Activated B cell treated with CpG ODN at 0.5 μM for 24 hours (primary cell): ENCODE measurements at regions of chr12 and their contacts with region 1.

Region 1: GRCh38 chr12:25386831-25387731 is 136.4 kb upstream of the KRAS start:
- DNase-seq: peak; percentile 45
- ATAC-seq: peak; percentile 11
- H3K4me3 Mint-ChIP-seq: peak overlapping the region; percentile 97
- H3K27ac Mint-ChIP-seq: peak overlapping the region; percentile 100
- H3K4me1 Mint-ChIP-seq: peaks cover 34% of the 10 kb centered on the region
- H3K27me3 Mint-ChIP-seq: no peaks in the 10 kb centered on the region
- CTCF ChIP-seq: peak; percentile 62

Region 2: GRCh38 chr12:24960222-24960855 is 426.7 kb before region 1 on chr12:
- CTCF ChIA-PET with region 1: interaction called, 3 read pairs
- POLR2A ChIA-PET with region 1: no interaction called
- intact Hi-C with region 1: loop called (anchors 1 kb)
- DNase-seq: no peak
- ATAC-seq: peak; percentile 79
- H3K4me3 Mint-ChIP-seq: no peak overlapping the region
- H3K27ac Mint-ChIP-seq: no peak overlapping the region
- H3K4me1 Mint-ChIP-seq: peaks cover 14% of the 10 kb centered on the region
- H3K27me3 Mint-ChIP-seq: no peaks in the 10 kb centered on the region
- CTCF ChIP-seq: no peak

Region 3: DNA sequence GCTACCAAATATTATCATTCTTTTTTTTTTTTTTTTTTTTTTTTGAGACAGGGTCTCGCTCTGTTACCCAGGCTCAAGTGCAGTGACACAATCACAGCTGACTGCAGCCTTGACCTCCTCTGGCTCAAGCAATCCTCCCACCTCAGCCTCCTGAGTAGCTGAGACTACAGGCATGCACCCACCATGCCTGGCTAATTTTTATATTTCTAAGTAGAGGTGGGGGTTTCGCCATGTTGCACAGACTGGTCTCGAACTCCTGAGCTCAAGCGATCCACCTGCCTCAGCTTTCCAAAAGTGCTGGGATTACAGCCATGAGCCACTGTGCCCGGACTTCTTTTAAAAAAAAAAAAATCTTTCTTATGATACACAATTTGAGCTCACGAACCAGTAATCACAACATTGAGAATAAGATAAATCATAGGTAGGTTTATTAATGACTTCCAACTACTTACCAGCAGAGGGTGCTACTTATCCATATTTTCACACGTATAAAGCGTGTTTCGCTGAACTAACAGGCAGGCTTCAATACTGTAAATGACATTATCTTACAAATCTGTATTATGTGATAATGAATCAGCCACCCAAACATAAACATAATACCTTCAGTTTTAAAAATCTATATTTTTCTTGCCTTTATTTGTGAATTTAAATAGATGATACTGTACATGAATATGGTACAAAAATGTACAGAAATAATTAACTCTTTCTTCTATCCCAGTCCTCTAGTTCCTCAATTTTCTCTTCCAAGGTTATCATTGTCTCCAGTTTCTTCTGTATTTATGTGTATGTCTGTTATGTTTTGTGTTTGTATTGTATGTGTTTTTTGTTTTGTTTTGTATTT is 395.7 kb before region 1 on chr12:
- CTCF ChIA-PET with region 1: no interaction called
- POLR2A ChIA-PET with region 1: no interaction called
- intact Hi-C with region 1: loop called (anchors 1 kb)
- DNase-seq: no peak
- ATAC-seq: peak; percentile 65
- H3K4me3 Mint-ChIP-seq: no peak overlapping the region
- H3K27ac Mint-ChIP-seq: no peak overlapping the region
- H3K4me1 Mint-ChIP-seq: peaks cover 46% of the 10 kb centered on the region
- H3K27me3 Mint-ChIP-seq: no peaks in the 10 kb centered on the region
- CTCF ChIP-seq: no peak

Region 4: DNA sequence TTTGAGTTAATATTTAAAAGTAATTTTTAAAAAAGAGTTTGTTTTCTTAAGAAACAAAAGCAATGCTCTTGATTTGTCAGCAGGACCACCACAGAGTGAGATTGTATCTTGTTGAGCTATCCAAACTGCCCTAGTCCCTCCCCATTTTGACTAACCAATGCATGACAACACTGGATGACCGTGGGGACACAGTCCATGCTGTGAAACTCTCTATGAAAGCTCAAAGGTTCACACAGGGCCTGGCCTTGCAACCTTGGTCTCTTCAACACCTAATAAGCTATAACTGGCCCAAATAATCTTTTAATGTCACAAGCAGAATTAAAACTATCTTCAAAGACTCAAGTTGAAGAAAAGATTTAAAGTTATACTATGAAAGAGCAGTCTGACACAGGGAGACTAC is 178.5 kb before region 1 on chr12:
- CTCF ChIA-PET with region 1: no interaction called
- POLR2A ChIA-PET with region 1: interaction called, 4 read pairs
- intact Hi-C with region 1: loop called (anchors 1 kb)
- DNase-seq: no peak
- ATAC-seq: no peak
- H3K4me3 Mint-ChIP-seq: no peak overlapping the region
- H3K27ac Mint-ChIP-seq: no peak overlapping the region
- H3K4me1 Mint-ChIP-seq: no peaks in the 10 kb centered on the region
- H3K27me3 Mint-ChIP-seq: no peaks in the 10 kb centered on the region
- CTCF ChIP-seq: no peak

Region 5: GRCh38 chr12:25241167-25242020 is 145.7 kb before region 1 on chr12:
- CTCF ChIA-PET with region 1: interaction called, 14 read pairs
- POLR2A ChIA-PET with region 1: interaction called, 5 read pairs
- intact Hi-C with region 1: loop called (anchors 1 kb)
- DNase-seq: no peak
- ATAC-seq: peak; percentile 72
- H3K4me3 Mint-ChIP-seq: no peak overlapping the region
- H3K27ac Mint-ChIP-seq: no peak overlapping the region
- H3K4me1 Mint-ChIP-seq: peaks cover 15% of the 10 kb centered on the region
- H3K27me3 Mint-ChIP-seq: no peaks in the 10 kb centered on the region
- CTCF ChIP-seq: peak; percentile 28

Region 6: GRCh38 chr12:25347716-25348271 is 39.3 kb before region 1 on chr12:
- CTCF ChIA-PET with region 1: interaction called, 3 read pairs
- POLR2A ChIA-PET with region 1: no interaction called
- intact Hi-C with region 1: loop called (anchors 5 kb)
- DNase-seq: no peak
- ATAC-seq: no peak
- H3K4me3 Mint-ChIP-seq: no peak overlapping the region
- H3K27ac Mint-ChIP-seq: no peak overlapping the region
- H3K4me1 Mint-ChIP-seq: peaks cover 4% of the 10 kb centered on the region
- H3K27me3 Mint-ChIP-seq: peaks cover 1% of the 10 kb centered on the region
- CTCF ChIP-seq: no peak

Region 7: GRCh38 chr12:25364529-25365339 is 22.3 kb before region 1 on chr12:
- CTCF ChIA-PET with region 1: interaction called, 7 read pairs
- POLR2A ChIA-PET with region 1: interaction called, 14 read pairs
- intact Hi-C with region 1: no loop called
- DNase-seq: no peak
- ATAC-seq: peak; percentile 50
- H3K4me3 Mint-ChIP-seq: peak overlapping the region; percentile 45
- H3K27ac Mint-ChIP-seq: peak overlapping the region; percentile 26
- H3K4me1 Mint-ChIP-seq: peaks cover 19% of the 10 kb centered on the region
- H3K27me3 Mint-ChIP-seq: peaks cover 2% of the 10 kb centered on the region
- CTCF ChIP-seq: no peak

Region 8: GRCh38 chr12:25424211-25424731 is 37.2 kb after region 1 on chr12:
- CTCF ChIA-PET with region 1: no interaction called
- POLR2A ChIA-PET with region 1: no interaction called
- intact Hi-C with region 1: no loop called
- DNase-seq: no peak
- ATAC-seq: no peak
- H3K4me3 Mint-ChIP-seq: no peak overlapping the region
- H3K27ac Mint-ChIP-seq: no peak overlapping the region
- H3K4me1 Mint-ChIP-seq: no peaks in the 10 kb centered on the region
- H3K27me3 Mint-ChIP-seq: peaks cover 4% of the 10 kb centered on the region
- CTCF ChIP-seq: no peak